CD8-positive, alpha-beta memory T cell (primary cell): ENCODE measurements at regions of chr4 and their contacts with region 1.

Region 1: DNA sequence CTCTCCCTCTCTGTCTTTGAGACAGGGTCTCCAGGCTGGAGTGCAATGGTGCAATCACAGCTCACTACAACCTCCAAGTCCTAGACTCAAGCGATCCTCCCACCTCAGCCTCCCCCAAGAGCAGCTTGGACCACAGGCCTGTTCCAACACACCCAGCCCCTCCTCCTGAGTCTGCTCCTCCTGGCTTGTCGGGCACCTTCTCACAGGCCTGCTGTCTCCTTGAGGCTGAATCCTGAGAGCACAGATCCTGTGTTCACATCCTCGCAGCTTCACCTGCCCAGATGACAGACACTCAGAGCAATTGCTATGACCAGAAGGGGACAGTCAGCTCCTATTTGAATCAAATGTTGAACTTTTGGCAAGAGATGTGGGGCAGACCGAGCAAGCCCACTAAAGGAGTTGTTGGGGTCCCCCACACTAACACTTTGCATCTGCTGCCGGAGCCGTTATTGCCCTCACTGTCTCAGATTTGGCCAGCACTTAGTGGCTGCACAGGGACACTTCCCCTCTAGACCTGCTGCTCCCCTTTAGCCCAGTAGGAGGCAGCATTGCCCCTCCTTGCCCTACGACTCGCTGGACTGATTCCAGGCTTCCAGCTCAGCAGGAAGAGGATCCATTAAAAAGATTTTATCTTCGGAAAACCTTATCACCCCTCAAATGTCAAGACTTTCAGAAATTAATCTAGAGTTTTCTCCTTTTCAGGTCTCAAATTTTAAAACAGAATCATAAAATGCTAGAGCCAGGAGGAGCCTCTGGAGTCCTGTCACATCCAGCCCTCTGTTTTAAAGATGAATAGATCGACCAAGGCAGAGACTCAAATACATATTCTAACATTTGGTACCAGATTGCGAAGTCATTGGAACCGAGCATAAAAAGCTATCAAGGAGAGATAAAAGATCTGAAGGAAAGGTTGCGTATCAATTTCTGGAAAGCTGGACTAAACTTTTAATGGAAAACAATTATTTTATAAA is 113.7 kb downstream of the USP46 start:
- DNase-seq: peak; percentile 18 to 68 (median 35)
- H3K4me3 ChIP-seq: no peak overlapping the region
- H3K4me3 Mint-ChIP-seq: no peak overlapping the region
- H3K27ac ChIP-seq: no peak overlapping the region
- H3K27ac Mint-ChIP-seq: peak overlapping the region in 1 of 8 donors; percentile 5
- H3K4me1 ChIP-seq: no peaks in the 10 kb centered on the region
- H3K4me1 Mint-ChIP-seq: no peaks in the 10 kb centered on the region
- H3K27me3 ChIP-seq: no peaks in the 10 kb centered on the region
- H3K27me3 Mint-ChIP-seq: peaks cover 3 to 21% of the 10 kb centered on the region in 2 donors

Region 2: DNA sequence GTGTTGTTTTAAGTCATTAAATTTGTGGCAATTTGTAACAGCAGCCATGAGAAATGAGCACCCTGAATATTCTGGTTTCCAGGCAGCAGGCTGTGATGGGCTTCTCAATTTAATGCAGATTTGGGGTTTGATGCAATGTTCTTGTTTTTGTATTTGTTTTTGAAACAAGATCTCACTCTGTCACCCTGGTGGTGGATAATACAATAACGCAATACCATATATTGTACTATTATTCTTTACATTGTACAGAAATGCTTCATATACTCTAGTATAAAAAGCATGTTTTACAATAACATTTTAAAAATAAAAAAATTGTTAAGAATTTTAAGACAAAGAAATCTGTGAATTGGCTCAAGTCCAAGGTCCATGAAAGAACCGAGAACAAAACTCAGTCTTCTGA is 15.4 kb before region 1 on chr4:
- CTCF ChIA-PET with region 1: no interaction called
- POLR2A ChIA-PET with region 1: no interaction called
- DNase-seq: no peak
- H3K4me3 ChIP-seq: no peak overlapping the region
- H3K4me3 Mint-ChIP-seq: no peak overlapping the region
- H3K27ac ChIP-seq: no peak overlapping the region
- H3K27ac Mint-ChIP-seq: no peak overlapping the region
- H3K4me1 ChIP-seq: no peaks in the 10 kb centered on the region
- H3K4me1 Mint-ChIP-seq: no peaks in the 10 kb centered on the region
- H3K27me3 ChIP-seq: no peaks in the 10 kb centered on the region
- H3K27me3 Mint-ChIP-seq: peaks cover 5 to 9% of the 10 kb centered on the region in 2 donors

Region 3: DNA sequence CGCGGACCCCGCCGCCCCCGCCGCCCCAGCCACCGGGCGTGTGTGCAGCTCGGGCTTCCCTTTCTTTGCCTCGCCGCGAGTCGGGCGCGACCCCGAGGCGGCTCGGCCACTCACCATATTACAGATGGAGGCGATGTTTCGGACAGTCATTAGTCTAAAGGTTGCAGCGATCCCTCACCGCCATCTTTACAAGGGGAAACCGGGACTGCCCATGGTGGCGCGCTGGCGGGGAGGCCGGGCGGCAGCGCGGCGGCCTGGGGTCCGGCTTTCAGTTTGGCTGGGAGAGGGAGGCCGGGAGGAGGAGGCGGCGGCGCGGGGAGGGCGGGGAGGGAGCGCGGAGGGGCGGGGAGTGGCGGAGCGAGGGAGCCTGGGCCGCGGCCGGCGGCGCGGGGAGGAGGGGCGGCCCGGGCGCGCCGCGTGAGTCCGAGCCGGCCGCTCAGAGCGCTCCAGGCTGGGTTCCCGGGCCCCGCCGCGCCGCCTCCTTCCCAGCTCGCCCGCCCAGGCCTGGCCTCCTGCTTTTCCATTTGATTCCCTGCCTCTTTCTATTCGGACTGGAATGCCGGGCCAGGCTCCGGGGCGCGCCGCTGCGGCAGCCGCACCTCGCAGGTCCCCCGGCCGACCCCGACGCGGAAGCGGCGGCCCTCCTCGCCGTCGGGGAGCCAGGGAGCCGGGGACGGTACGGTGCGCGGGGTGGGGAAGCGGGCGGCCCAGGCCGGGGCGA is 113.8 kb after region 1 on chr4 and contains the start of gene USP46:
- CTCF ChIA-PET with region 1: interaction called, 12 read pairs
- POLR2A ChIA-PET with region 1: no interaction called
- DNase-seq: peak; percentile 12 to 61 (median 39)
- H3K4me3 ChIP-seq: peak within 1 kb of the TSS; percentile 76
- H3K4me3 Mint-ChIP-seq: peak within 1 kb of the TSS; percentile 88 to 95 (median 92)
- H3K27ac ChIP-seq: peak within 1 kb of the TSS; percentile 47
- H3K27ac Mint-ChIP-seq: peak within 1 kb of the TSS; percentile 50 to 94 (median 82)
- H3K4me1 ChIP-seq: peaks cover 9% of the 10 kb centered on the region
- H3K4me1 Mint-ChIP-seq: peaks cover 30 to 53% (median 49%) of the 10 kb centered on the region in 3 donors
- H3K27me3 ChIP-seq: no peaks in the 10 kb centered on the region
- H3K27me3 Mint-ChIP-seq: no peaks in the 10 kb centered on the region
- total RNA-seq, gene USP46: 15.6 to 16.9 TPM

Region 4: DNA sequence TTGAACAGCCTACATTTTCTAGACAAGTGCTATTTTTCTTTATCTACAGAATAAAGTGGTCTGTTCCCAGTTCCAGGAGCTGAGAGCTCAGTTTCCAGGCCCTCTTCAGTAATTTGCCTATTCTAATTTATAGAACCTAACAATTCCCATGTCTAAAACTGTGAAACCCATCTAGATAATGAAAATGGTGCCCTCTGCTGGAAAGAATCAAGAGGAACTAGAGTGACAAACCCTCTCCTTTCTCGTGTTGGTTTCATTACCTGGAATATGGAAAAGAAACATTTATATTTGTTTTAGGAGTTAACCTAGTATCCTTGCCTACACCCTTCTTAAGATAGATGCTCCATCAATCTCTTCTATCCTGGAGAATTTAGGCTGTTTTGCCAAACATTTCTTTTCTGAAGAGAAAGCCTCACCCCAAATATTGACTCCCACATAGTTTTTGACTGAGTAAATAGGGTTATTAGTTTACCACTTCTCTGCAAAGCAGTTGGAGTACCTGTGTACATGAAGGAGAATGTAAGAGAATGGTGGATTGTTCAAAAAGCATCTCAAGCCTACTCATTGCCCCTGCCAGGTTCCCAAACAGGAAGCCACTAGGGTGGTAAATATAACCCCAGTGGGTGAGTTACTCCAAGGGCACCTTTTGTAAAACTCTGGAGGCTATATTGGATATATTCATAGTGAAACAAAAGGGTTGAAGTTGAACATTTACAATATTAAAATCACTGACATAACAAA is 438.3 kb after region 1 on chr4:
- CTCF ChIA-PET with region 1: interaction called, 13 read pairs
- POLR2A ChIA-PET with region 1: no interaction called
- DNase-seq: peak in 2 of 5 donors; percentile 8 to 35
- H3K4me3 ChIP-seq: no peak overlapping the region
- H3K4me3 Mint-ChIP-seq: no peak overlapping the region
- H3K27ac ChIP-seq: no peak overlapping the region
- H3K27ac Mint-ChIP-seq: no peak overlapping the region
- H3K4me1 ChIP-seq: no peaks in the 10 kb centered on the region
- H3K4me1 Mint-ChIP-seq: no peaks in the 10 kb centered on the region
- H3K27me3 ChIP-seq: no peaks in the 10 kb centered on the region
- H3K27me3 Mint-ChIP-seq: no peaks in the 10 kb centered on the region